Endothelial cell of umbilical vein (primary cell): ENCODE measurements at regions of chr5 and their contacts with region 1.

Region 1: DNA sequence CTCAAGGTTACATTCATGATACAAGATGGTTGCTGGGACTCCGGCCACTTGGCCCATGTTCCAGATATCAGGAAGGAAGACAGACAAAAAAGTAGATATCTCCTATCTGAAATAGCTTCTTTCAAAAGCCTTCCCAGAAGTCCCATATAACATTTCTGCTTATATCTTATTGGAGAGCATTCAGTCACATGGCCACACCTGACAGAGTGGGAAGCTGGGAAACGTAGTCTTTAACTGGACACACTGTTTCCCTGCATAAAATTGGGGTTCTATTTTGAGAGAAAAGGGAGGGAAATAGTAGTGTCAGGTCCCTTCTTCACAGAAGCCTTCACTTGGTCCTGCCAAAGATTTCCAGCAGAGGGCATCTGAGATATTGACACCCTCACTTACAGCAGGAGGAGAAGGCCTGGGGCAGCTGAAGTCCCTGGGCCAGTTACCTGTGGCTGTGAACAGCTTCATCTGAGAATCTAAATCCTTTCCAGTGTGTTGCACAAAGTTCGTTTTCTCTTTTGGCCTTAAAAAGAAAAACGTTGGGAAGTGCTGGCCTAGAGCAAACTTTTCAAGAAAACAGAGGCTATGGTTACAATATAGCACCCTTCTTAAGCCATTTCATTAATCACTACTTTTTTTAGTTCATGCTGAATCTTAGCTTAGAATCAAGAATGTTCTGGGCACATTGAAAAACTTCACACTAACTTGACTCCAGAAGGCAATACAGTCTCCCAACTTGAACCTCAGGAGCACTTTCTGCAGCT is 33.5 kb downstream of the SPEF2 start:
- DNase-seq: peak; percentile 57
- H3K4me3 ChIP-seq: no peak overlapping the region
- H3K27ac ChIP-seq: no peak overlapping the region
- H3K4me1 ChIP-seq: no peaks in the 10 kb centered on the region
- H3K27me3 ChIP-seq: no peaks in the 10 kb centered on the region
- CTCF ChIP-seq: peak; percentile 35 to 68
- POLR2A ChIP-seq: no peak

Region 2: DNA sequence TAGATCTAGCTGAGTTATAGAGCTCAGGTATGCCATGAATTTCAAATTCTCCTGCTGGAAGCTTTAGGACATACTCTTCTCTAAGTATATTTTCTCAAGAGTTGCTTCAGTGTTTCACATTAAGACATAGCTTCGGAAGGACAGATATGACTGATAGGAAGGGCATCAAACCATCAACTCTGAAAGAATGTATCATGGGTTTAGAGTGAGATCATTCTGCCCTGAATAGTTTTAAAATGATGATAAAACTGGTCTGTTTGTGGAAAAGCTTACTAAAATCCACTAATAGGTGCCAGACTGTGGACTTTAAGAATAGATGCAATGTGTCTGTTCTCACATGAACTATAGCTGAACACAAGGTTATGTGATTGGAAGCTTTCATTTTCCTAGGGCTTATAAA is 25.1 kb before region 1 on chr5:
- CTCF ChIA-PET with region 1: interaction called, 11 read pairs
- POLR2A ChIA-PET with region 1: no interaction called
- dilution Hi-C with region 1: no loop called
- intact Hi-C with region 1: no loop called
- DNase-seq: no peak
- H3K4me3 ChIP-seq: no peak overlapping the region
- H3K27ac ChIP-seq: no peak overlapping the region
- H3K4me1 ChIP-seq: no peaks in the 10 kb centered on the region
- H3K27me3 ChIP-seq: no peaks in the 10 kb centered on the region
- CTCF ChIP-seq: no peak
- POLR2A ChIP-seq: no peak

Region 3: DNA sequence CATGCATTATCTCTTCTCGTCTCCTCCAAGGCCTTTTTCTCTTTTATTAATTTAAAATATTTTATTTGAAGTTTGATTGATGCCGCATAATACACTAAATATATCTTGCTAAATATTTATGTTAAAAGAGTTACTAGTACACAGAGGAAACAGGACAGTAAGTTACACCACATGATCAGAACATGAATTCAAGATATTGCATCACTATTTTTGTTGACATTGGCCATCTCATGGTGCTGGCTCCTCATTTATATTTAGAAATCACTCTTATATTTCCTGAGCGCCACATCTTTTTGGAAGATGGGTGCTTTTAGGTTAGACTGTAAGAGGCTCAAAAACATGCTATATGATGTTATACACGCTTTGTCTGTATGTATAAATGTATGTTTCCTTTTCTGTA is 10.6 kb before region 1 on chr5:
- CTCF ChIA-PET with region 1: interaction called, 13 read pairs
- POLR2A ChIA-PET with region 1: no interaction called
- dilution Hi-C with region 1: no loop called
- intact Hi-C with region 1: no loop called
- DNase-seq: no peak
- H3K4me3 ChIP-seq: no peak overlapping the region
- H3K27ac ChIP-seq: no peak overlapping the region
- H3K4me1 ChIP-seq: no peaks in the 10 kb centered on the region
- H3K27me3 ChIP-seq: no peaks in the 10 kb centered on the region
- CTCF ChIP-seq: no peak
- POLR2A ChIP-seq: no peak

Region 4: DNA sequence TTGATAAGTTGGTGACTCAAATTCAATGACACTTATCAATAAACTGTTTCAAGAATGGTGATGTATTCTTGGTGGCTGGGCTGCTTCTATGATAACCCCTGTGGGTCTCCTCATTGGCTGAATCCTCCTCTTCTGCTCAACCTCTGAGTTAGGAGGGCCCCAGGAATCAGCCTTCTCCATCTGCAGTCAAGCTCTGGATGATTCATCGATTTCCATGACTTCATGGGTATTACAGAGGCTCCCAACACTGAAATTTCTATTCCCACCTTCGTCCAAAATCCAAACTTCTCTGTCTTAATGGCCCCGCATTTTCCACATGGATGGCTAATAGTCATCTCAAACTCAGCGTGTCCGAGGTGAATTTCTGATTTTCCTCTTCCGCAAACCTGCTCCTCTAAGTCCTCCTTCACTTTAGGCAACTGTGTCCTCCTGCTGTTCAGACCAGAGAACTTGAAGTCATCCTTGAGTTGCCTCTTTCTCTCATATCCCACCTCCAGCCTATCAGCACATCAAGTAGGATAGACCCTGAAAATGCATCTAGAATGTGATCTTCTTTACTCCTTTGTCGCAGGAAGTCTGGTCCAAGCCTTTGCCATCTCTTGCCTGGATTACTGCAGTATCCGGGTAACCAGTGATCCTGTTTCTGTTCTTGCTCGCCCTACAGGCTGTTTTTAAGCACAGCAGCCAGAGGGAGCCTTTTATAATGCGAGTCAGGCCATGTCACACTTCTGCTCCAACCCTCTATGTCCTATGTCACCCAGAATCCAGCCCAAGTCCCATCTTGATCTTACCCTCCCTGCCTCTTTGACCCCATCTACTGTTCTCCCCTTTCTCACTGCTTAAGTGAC is 164.1 kb after region 1 on chr5:
- CTCF ChIA-PET with region 1: interaction called, 3 read pairs
- POLR2A ChIA-PET with region 1: no interaction called
- dilution Hi-C with region 1: no loop called
- intact Hi-C with region 1: loop called (anchors 1 kb)
- DNase-seq: peak; percentile 59
- H3K4me3 ChIP-seq: no peak overlapping the region
- H3K27ac ChIP-seq: no peak overlapping the region
- H3K4me1 ChIP-seq: no peaks in the 10 kb centered on the region
- H3K27me3 ChIP-seq: no peaks in the 10 kb centered on the region
- CTCF ChIP-seq: peak; percentile 61 to 79
- POLR2A ChIP-seq: no peak

Region 5: DNA sequence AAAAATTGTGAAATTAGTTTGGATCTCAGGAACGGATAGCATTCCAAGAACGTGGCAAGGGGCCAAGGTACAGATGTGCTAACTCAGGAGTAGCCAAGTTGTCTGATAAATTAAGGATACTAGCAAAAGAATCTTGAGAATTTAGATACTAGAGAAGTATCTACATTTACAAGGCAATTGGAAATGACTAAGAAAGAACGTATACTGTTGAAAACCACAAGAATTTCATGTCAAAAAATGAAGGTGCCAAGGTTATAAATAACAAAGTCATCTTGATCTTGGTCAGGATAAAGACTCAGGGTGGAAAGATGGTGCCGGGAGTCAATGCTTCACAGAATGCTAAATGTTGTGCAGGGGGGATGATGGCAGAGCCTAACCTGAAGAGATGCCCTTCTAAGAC is 268.0 kb after region 1 on chr5:
- CTCF ChIA-PET with region 1: interaction called, 339 read pairs
- POLR2A ChIA-PET with region 1: no interaction called
- dilution Hi-C with region 1: no loop called
- intact Hi-C with region 1: loop called (anchors 1 kb)
- DNase-seq: no peak
- H3K4me3 ChIP-seq: no peak overlapping the region
- H3K27ac ChIP-seq: no peak overlapping the region
- H3K4me1 ChIP-seq: no peaks in the 10 kb centered on the region
- H3K27me3 ChIP-seq: peaks cover 0 to 2% of the 10 kb centered on the region in 2 experiments
- CTCF ChIP-seq: no peak
- POLR2A ChIP-seq: no peak